ENCODE measurements at regions of chr18 and their contacts with region 1.

Region 1: GRCh38 chr18:50819728-50820378 is at the start of gene MRO:
- DNase-seq: peak; percentile 46
- H3K4me3 ChIP-seq: peak within 1 kb of the TSS; percentile 35 to 51 (median 45)
- H3K27ac ChIP-seq: no peak within 1 kb of the TSS
- H3K4me1 ChIP-seq: peaks cover 12% of the 10 kb centered on the region
- H3K27me3 ChIP-seq: no peaks in the 10 kb centered on the region
- CTCF ChIP-seq: peak; percentile 96 to 97
- total RNA-seq, gene MRO: not detected

Region 2: GRCh38 chr18:50866765-50867164 is 46.9 kb after region 1 on chr18:
- CTCF ChIA-PET with region 1: no interaction called
- dilution Hi-C with region 1: no loop called
- in situ Hi-C with region 1: no loop called
- intact Hi-C with region 1: loop called (anchors 1 kb)
- DNase-seq: no peak
- H3K4me3 ChIP-seq: no peak overlapping the region
- H3K27ac ChIP-seq: no peak overlapping the region
- H3K4me1 ChIP-seq: peaks cover 32% of the 10 kb centered on the region
- H3K27me3 ChIP-seq: no peaks in the 10 kb centered on the region
- CTCF ChIP-seq: peak; percentile 13 to 29

Region 3: GRCh38 chr18:50973367-50974126 is 153.7 kb after region 1 on chr18:
- CTCF ChIA-PET with region 1: no interaction called
- dilution Hi-C with region 1: no loop called
- in situ Hi-C with region 1: no loop called
- intact Hi-C with region 1: loop called (anchors 1 kb)
- DNase-seq: peak; percentile 90
- H3K4me3 ChIP-seq: no peak overlapping the region
- H3K27ac ChIP-seq: peak overlapping the region; percentile 2
- H3K4me1 ChIP-seq: peaks cover 16% of the 10 kb centered on the region
- H3K27me3 ChIP-seq: no peaks in the 10 kb centered on the region
- CTCF ChIP-seq: no peak

Region 4: DNA sequence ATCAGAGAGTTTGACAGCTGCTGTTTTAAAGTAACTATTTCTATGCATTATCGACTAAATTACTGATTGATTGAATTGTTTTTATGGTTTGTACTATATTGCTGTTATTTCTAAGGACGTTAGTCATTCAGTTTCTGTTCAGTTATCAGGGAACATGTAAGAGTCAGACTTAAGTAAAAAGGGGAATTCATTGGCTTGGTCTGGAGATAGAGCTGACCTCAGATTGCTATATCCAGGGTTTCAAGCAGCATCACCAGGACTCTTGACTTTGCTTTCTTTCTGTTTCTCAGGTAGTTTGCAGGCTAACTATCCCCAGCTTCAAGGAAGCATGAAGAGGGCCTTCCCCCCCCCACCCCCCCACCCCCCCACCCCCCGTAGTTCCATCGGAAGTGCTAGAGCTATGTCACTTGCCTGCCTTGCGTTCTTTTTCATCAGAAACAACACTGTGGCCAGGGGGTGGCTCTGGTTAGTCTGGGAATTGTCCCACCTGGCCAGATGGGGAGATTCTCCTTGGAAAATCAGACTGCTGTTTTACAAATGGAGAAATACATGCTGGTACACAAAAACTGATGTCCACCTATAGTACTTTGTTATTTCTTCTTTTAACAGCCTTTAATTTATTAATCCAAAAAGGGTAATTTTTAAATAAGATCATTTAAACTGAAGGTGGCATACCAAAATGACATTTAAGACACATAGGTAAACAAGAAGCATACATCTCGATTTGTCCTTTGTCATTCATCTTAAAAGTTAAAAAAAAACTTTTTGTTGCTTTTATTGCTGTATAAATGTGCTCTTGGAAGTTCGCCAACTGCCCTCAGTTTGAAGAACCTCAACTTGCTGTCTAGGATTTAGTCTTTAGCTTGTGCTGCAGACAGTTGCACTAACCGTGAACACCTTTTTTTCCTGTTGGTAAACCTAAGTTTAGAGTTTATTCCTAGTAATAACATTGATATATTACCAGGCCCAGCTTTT is 219.6 kb after region 1 on chr18:
- CTCF ChIA-PET with region 1: no interaction called
- dilution Hi-C with region 1: no loop called
- in situ Hi-C with region 1: loop called in 1 of 2 experiments (anchors 10 kb)
- intact Hi-C with region 1: no loop called
- DNase-seq: peak; percentile 20
- H3K4me3 ChIP-seq: no peak overlapping the region
- H3K27ac ChIP-seq: peak overlapping the region; percentile 5
- H3K4me1 ChIP-seq: no peaks in the 10 kb centered on the region
- H3K27me3 ChIP-seq: no peaks in the 10 kb centered on the region
- CTCF ChIP-seq: no peak

Region 5: GRCh38 chr18:51051105-51051712 is 231.4 kb after region 1 on chr18:
- CTCF ChIA-PET with region 1: no interaction called
- dilution Hi-C with region 1: no loop called
- in situ Hi-C with region 1: loop called (anchors 5 to 10 kb)
- intact Hi-C with region 1: loop called (anchors 1 kb)
- DNase-seq: peak; percentile 27
- H3K4me3 ChIP-seq: no peak overlapping the region
- H3K27ac ChIP-seq: no peak overlapping the region
- H3K4me1 ChIP-seq: no peaks in the 10 kb centered on the region
- H3K27me3 ChIP-seq: no peaks in the 10 kb centered on the region
- CTCF ChIP-seq: peak; percentile 79 to 83

Region 6: DNA sequence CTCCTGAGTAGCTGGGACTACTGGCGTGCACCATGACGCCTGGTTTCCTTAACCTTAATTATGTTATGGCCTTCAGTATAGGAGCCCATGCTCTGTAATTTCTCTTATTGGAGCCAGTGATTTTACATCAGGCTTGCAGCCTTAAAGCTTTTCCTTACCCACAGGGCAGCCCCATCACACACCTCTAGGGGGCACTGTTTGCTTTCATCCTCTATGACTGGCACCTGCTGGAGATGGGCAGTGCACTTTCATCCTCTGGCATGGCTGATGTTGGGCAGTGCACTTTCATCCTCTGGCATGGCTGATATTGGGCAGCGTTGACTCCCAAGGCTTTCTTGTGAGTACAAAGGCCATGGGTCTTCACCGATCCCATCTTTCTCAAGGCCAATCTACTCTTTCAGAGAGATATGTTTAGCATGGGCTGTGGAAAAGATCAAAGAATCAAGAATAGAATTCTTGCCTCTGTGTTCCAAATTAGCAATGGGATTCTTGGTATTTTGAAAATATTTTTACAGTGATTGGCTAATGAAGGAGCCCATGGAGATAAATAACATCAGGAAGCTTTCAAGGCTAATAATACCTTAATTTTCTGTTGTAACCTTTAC is 458.3 kb after region 1 on chr18:
- CTCF ChIA-PET with region 1: no interaction called
- dilution Hi-C with region 1: no loop called
- in situ Hi-C with region 1: no loop called
- intact Hi-C with region 1: loop called (anchors 5 kb)
- DNase-seq: peak; percentile 57
- H3K4me3 ChIP-seq: no peak overlapping the region
- H3K27ac ChIP-seq: no peak overlapping the region
- H3K4me1 ChIP-seq: no peaks in the 10 kb centered on the region
- H3K27me3 ChIP-seq: no peaks in the 10 kb centered on the region
- CTCF ChIP-seq: peak; percentile 96 to 98

Region 7: DNA sequence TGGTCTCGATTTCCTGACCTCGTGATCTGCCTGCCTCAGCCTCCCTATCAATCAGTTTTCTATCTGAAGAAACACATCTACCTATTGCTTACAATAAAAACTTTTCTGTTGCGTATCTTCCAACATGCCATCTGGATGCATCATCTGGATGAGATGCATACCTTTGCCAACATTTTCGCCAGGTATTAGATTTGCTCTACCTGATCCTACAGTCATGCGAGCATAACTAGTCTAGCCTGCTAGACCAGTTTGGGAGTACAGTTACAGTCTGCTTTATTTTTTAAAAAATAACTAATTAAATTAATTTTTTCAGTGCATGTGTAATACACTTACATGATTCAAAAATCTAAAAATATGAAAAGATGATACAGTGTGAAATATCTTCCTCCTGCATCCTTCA is 711.7 kb after region 1 on chr18:
- CTCF ChIA-PET with region 1: no interaction called
- dilution Hi-C with region 1: no loop called
- in situ Hi-C with region 1: no loop called
- intact Hi-C with region 1: loop called (anchors 5 kb)
- DNase-seq: peak; percentile 93
- H3K4me3 ChIP-seq: no peak overlapping the region
- H3K27ac ChIP-seq: peak overlapping the region; percentile 51
- H3K4me1 ChIP-seq: peaks cover 36% of the 10 kb centered on the region
- H3K27me3 ChIP-seq: no peaks in the 10 kb centered on the region
- CTCF ChIP-seq: no peak